ENCODE measurements at regions of chr2 and their contacts with region 1.

Region 1: DNA sequence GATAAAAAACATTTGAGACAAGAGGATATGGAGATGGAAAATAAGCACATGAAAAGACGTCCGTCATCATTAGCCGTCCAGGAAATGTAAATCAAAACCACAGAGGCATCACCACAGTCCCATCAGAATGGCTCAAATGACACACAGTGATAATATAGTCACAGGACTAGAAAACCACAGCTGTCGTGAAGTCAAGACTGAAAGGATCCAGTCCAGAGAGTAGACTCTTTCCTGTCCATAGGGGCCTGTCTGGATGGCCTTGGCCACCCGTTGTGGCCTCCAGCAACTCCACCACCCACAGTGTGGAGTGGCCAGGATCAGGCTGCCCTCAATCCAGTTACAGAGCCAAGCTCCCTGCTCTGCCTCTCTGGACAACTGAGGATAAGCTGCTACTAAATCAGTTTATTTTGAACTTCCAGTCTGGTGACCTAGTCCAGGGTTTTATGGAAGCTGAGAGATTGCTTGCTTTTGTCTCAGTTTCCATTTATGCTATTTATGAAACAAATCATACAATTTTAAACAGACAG is 60.4 kb downstream of the RHOB start:
- DNase-seq: peak; percentile 65
- CTCF ChIP-seq: no peak

Region 2: GRCh38 chr2:20525041-20526035 is 18.1 kb after region 1 on chr2:
- CTCF ChIA-PET with region 1: interaction called, 24 read pairs
- POLR2A ChIA-PET with region 1: interaction called, 3 read pairs
- DNase-seq: peak; percentile 81
- CTCF ChIP-seq: peak; percentile 13

Region 3: DNA sequence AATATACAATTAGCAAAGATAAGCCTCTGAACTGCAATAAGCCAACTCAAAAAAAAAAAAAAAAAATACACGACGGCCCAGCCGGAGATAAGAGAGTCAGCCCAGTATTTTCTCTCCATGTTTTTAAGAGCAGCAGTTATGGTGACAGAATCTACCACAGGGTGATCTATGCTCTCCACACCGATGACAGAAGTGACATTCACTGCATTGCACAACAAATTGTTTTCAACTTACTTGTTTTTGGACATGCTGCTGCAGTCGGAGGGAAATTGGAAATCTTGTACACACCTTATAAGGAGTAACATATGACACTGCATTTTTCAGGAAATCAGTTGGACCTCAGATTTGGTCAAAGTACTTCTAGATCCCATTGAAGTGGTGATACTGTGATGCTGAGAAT is 559.9 kb after region 1 on chr2:
- CTCF ChIA-PET with region 1: no interaction called
- POLR2A ChIA-PET with region 1: no interaction called
- DNase-seq: no peak
- CTCF ChIP-seq: no peak

Measured in GM10248 (cell line).